Prostate gland (tissue), 2 donors: ENCODE measurements at regions of chr18 and their contacts with region 1.

Region 1: GRCh38 chr18:26909599-26910290 is 44.2 kb upstream of the AQP4 start:
- DNase-seq: no peak
- H3K4me3 ChIP-seq: no peak overlapping the region
- H3K27ac ChIP-seq: no peak overlapping the region
- H3K4me1 ChIP-seq: no peaks in the 10 kb centered on the region
- H3K27me3 ChIP-seq: no peaks in the 10 kb centered on the region
- CTCF ChIP-seq: no peak
- POLR2A ChIP-seq: no peak

Region 2: DNA sequence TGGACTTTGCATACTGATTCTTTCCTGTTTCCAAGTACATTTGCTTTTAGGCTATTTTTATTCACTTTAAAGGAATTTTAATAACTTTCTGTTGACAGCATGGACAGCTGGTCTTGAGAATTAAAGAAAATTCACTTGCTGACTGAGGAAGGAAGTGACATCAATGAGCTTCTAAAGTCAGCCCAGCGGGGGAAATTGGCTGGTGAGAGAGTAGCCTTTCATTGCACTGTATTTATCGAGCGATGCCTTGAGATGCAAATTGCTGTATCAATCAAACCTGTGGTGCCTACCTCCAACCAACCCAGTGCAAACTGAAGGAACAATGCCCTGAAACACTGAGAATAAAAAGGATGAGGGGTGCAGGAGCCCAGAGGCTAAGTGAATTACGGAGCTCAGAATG is 47.1 kb after region 1 on chr18:
- intact Hi-C with region 1: loop called (anchors 5 kb)
- DNase-seq: no peak
- H3K4me3 ChIP-seq: no peak overlapping the region
- H3K27ac ChIP-seq: no peak overlapping the region
- H3K4me1 ChIP-seq: no peaks in the 10 kb centered on the region
- H3K27me3 ChIP-seq: no peaks in the 10 kb centered on the region
- CTCF ChIP-seq: no peak
- POLR2A ChIP-seq: no peak